GM18951 (cell line): ENCODE measurements at regions of chr1 and their contacts with region 1.

Region 1: GRCh38 chr1:173444757-173445156 is 32.4 kb upstream of the PRDX6 start:
- POLR2A ChIP-seq: no peak

Region 2: GRCh38 chr1:171828794-171829193 is 1616.0 kb before region 1 on chr1:
- in situ Hi-C with region 1: loop called (anchors 10 kb)
- POLR2A ChIP-seq: no peak

Region 3: DNA sequence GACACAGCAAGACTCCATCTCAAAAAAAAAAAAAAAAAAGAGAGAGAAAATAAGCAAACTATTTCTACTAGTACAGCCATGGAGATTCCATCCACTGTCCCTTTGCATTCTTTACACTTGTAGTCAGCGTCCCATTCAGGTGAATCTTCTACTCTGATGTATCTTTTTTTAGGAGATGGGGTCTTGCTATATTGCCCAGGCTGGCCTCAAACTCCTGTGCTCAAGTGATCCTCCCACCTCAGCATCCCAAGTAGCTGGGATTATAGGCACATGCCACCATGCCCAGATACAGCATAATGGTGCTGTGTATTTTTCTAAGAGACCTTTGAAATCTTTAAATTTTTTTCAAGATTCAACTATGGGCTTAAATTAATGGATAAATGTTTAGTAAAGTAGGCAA is 388.0 kb after region 1 on chr1:
- in situ Hi-C with region 1: no loop called
- POLR2A ChIP-seq: no peak